Sciatic nerve (tissue), 2 donors: ENCODE measurements at regions of chr20 and their contacts with region 1.

Region 1: GRCh38 chr20:19720991-19721390 is 37.1 kb upstream of the RIN2 start:
- DNase-seq: no peak
- ATAC-seq: no peak

Region 2: DNA sequence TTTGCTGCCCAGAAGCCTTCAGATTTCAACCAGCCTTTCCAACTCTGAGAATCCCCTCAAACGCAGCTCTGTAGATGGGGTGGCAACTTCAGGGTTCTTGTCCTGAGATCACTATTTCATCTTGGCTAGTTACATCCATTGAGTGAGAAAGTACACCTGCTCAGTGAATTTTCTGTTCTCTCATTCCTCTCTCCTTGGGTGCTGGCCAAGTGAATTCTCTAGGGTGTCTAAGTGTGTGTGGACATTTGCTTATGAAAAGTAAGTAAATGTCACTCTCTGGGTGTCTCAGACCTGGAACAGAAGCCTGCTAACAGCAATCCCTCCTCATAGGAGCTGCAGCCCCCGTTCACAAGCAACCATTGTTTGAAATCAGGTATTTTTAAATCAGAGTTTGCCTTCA is 40.9 kb after region 1 on chr20:
- intact Hi-C with region 1: loop called (anchors 2 kb)
- DNase-seq: no peak
- ATAC-seq: no peak